IMR-90 (cell line): ENCODE measurements at regions of chr5 and their contacts with region 1.

Region 1: DNA sequence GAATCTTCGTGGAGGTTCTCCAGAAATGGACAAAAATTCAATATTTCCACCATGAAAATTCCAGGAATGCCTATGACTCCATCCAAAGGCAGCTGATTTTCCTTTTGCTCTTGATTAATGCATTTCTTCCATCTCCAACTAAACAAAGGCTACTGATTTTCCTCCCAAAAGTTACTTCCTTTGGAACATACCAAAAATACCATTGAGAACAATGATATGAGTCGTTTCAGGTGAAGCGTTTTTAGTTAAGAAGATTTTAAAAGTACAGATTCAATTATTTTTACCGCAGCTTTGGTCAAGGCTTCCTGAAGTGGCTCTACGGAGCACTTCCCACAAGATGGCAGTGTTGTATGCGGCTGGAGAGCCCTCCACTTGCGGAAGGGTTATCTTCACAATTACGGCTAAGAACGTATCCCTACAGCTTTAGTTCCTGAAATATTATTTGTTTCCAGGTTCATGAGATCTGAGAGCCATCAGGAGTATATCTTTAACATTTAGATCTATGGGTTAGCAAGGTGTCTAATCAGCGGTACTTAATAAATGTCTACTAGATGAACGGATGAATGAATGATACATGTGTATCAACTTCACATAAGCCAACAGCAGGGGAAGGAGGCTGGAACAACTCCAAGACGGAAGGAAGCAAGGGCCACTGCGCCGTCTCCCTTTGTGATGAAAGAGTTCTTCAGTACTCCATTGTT is 35.9 kb upstream of the ARSB start:
- DNase-seq: peak; percentile 78
- ATAC-seq: peak; percentile 90
- H3K4me3 ChIP-seq: peak overlapping the region; percentile 39; the same call in 1 of the 2 replicates
- H3K27ac ChIP-seq: peak overlapping the region; percentile 35
- H3K4me1 ChIP-seq: peaks cover 5% of the 10 kb centered on the region
- H3K27me3 ChIP-seq: no peaks in the 10 kb centered on the region
- CTCF ChIP-seq: peak; percentile 77
- POLR2A ChIP-seq: no peak
- RAD21 ChIP-seq: peak; percentile 77

Region 2: DNA sequence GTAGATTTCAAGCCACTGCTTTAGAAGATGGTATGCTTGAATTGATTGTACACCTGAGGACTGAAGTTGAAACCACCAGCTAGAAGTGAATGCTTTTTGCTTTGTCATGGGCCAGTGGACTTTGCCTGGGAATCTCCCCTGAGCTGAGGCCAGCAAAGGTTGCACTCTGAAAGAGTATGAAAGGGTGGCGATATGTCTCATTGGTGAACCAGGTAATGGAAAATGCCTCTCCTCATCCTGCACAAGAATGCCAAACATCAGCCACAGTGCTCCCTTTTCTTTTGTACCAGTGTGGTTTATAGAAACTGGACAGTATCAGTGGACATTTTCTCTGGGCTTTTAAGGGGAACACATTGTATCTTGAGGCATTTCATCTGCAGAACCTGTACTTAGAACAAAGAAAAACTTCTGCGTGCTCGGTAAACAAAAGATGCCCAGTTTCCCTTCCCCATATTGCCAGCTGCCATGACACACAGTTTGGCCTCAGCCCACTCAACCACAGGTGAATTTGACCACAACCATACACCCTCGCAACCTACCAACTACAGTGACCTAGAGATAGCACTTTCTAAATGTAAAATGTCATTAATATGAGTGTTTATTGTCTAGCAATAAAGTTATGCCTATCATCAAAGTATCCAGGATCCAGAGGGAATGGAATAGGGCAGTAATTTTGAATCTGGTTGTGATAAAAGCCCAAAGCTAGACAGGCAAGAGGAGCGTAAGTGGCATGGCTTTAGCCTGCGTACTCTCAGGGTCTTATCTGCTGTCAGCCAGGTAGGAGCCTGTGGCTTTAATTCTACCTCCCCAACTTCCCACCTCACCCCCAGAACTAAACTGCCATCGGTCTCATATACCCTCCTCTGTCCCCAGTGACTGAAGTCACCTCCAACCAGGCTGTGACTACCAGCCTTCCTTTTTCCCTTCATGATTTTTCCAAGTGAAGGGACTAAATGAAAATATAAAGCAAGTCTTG is 292.9 kb before region 1 on chr5:
- CTCF ChIA-PET with region 1: no interaction called
- POLR2A ChIA-PET with region 1: no interaction called
- dilution Hi-C with region 1: no loop called
- in situ Hi-C with region 1: no loop called
- intact Hi-C with region 1: no loop called
- DNase-seq: no peak
- ATAC-seq: no peak
- H3K4me3 ChIP-seq: no peak overlapping the region
- H3K27ac ChIP-seq: no peak overlapping the region
- H3K4me1 ChIP-seq: peaks cover 4% of the 10 kb centered on the region; the same call in 1 of the 2 replicates
- H3K27me3 ChIP-seq: no peaks in the 10 kb centered on the region
- CTCF ChIP-seq: no peak
- POLR2A ChIP-seq: no peak
- RAD21 ChIP-seq: no peak

Region 3: GRCh38 chr5:78899922-78900362 is 121.1 kb before region 1 on chr5:
- CTCF ChIA-PET with region 1: no interaction called
- POLR2A ChIA-PET with region 1: no interaction called
- dilution Hi-C with region 1: no loop called
- in situ Hi-C with region 1: no loop called
- intact Hi-C with region 1: loop called (anchors 1 kb)
- DNase-seq: peak; percentile 67
- ATAC-seq: peak; percentile 19; the same call in 1 of the 2 replicates
- H3K4me3 ChIP-seq: no peak overlapping the region
- H3K27ac ChIP-seq: no peak overlapping the region
- H3K4me1 ChIP-seq: peaks cover 9% of the 10 kb centered on the region
- H3K27me3 ChIP-seq: no peaks in the 10 kb centered on the region
- CTCF ChIP-seq: peak; percentile 85
- POLR2A ChIP-seq: peak; percentile 39; the same call in 1 of the 2 replicates
- RAD21 ChIP-seq: peak; percentile 93

Region 4: GRCh38 chr5:79122973-79123372 is 102.0 kb after region 1 on chr5:
- CTCF ChIA-PET with region 1: interaction called, 11 read pairs
- POLR2A ChIA-PET with region 1: no interaction called
- dilution Hi-C with region 1: no loop called
- in situ Hi-C with region 1: no loop called
- intact Hi-C with region 1: no loop called
- DNase-seq: no peak
- ATAC-seq: no peak
- H3K4me3 ChIP-seq: no peak overlapping the region
- H3K27ac ChIP-seq: no peak overlapping the region
- H3K4me1 ChIP-seq: no peaks in the 10 kb centered on the region
- H3K27me3 ChIP-seq: peaks cover 4% of the 10 kb centered on the region; the same call in 1 of the 2 replicates
- CTCF ChIP-seq: no peak
- POLR2A ChIP-seq: no peak
- RAD21 ChIP-seq: no peak

Region 5: DNA sequence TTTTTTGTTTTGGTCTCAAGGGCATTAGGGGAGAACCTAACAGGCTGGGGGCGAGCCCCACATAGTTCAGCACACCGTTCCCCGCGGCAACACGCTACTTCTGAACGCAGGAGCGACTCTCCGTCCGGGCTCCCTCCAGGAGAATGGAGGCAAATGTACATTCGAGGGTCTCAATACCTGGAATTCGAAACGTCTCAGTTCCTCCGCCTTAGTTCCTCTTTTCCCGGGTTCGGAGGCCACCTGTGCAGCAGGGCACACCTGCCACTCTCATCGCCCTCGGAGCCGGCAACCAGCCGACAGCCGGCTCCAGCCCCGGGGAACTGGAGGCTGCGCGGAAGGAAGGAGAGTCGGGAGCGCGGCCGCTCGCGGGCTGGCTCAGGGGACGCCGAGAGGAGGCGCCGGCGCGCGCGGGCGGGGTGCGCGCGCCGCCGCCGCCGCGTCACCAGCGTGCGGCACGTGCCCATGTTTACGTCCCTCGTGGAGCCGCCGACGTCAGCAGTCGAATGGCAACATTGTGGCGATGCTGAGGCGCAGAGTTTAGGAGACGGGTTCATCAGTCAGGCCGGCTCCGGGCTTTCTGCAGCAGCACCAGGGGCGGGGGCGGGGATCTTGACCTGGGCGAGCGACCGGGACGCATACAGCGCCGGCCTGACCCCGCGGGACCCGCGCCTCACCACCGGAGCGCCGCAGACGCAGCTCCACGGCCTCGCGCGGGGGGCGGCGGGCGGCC is 214.8 kb after region 1 on chr5 and contains the start of gene JMY:
- CTCF ChIA-PET with region 1: no interaction called
- POLR2A ChIA-PET with region 1: no interaction called
- dilution Hi-C with region 1: no loop called
- in situ Hi-C with region 1: no loop called
- intact Hi-C with region 1: loop called (anchors 5 kb)
- DNase-seq: peak; percentile 85
- ATAC-seq: peak; percentile 93
- H3K4me3 ChIP-seq: peak within 1 kb of the TSS; percentile 76
- H3K27ac ChIP-seq: peak within 1 kb of the TSS; percentile 51
- H3K4me1 ChIP-seq: peaks cover 1% of the 10 kb centered on the region; the same call in 1 of the 2 replicates
- H3K27me3 ChIP-seq: no peaks in the 10 kb centered on the region
- CTCF ChIP-seq: peak; percentile 36
- POLR2A ChIP-seq: peak; percentile 74
- RAD21 ChIP-seq: no peak; the same call in 1 of the 2 replicates
- total RNA-seq, gene JMY: 3.2 and 5.6 TPM in 2 replicates

Region 6: GRCh38 chr5:79546782-79547428 is 525.9 kb after region 1 on chr5:
- CTCF ChIA-PET with region 1: no interaction called
- POLR2A ChIA-PET with region 1: no interaction called
- dilution Hi-C with region 1: no loop called
- in situ Hi-C with region 1: no loop called
- intact Hi-C with region 1: loop called (anchors 5 kb)
- DNase-seq: peak; percentile 70
- ATAC-seq: peak; percentile 92
- H3K4me3 ChIP-seq: no peak overlapping the region
- H3K27ac ChIP-seq: no peak overlapping the region; the same call in 1 of the 2 replicates
- H3K4me1 ChIP-seq: peaks cover 1% of the 10 kb centered on the region
- H3K27me3 ChIP-seq: 0 out of 2 replicates have a peak, but pooled peaks cover 2% of the 10 kb centered on the region
- CTCF ChIP-seq: no peak
- POLR2A ChIP-seq: no peak
- RAD21 ChIP-seq: no peak

Region 7: GRCh38 chr5:79857714-79858409 is 836.9 kb after region 1 on chr5:
- CTCF ChIA-PET with region 1: interaction called, 4 read pairs
- POLR2A ChIA-PET with region 1: no interaction called
- dilution Hi-C with region 1: no loop called
- in situ Hi-C with region 1: no loop called
- intact Hi-C with region 1: loop called (anchors 2 kb)
- DNase-seq: peak; percentile 55
- ATAC-seq: peak; percentile 75
- H3K4me3 ChIP-seq: no peak overlapping the region
- H3K27ac ChIP-seq: no peak overlapping the region
- H3K4me1 ChIP-seq: no peaks in the 10 kb centered on the region
- H3K27me3 ChIP-seq: peaks cover 9% of the 10 kb centered on the region
- CTCF ChIP-seq: peak; percentile 86
- POLR2A ChIP-seq: no peak
- RAD21 ChIP-seq: peak; percentile 84